Heart left ventricle (tissue), 16 donors: ENCODE measurements at regions of chr9 and their contacts with region 1.

Region 1: GRCh38 chr9:27870404-27870803 is 297.1 kb upstream of the C9orf72 start:
- DNase-seq: no peak
- ATAC-seq: no peak
- H3K4me3 ChIP-seq: no peak overlapping the region
- H3K27ac ChIP-seq: no peak overlapping the region
- H3K4me1 ChIP-seq: no peaks in the 10 kb centered on the region
- H3K27me3 ChIP-seq: no peaks in the 10 kb centered on the region
- CTCF ChIP-seq: no peak
- POLR2A ChIP-seq: no peak

Region 2: GRCh38 chr9:27817747-27818146 is 52.7 kb before region 1 on chr9:
- intact Hi-C with region 1: loop called in 1 of 10 experiments (anchors 10 kb)
- DNase-seq: no peak
- ATAC-seq: no peak
- H3K4me3 ChIP-seq: no peak overlapping the region
- H3K27ac ChIP-seq: no peak overlapping the region
- H3K4me1 ChIP-seq: no peaks in the 10 kb centered on the region
- H3K27me3 ChIP-seq: no peaks in the 10 kb centered on the region
- CTCF ChIP-seq: no peak
- POLR2A ChIP-seq: no peak

Region 3: GRCh38 chr9:27990524-27990923 is 120.1 kb after region 1 on chr9:
- intact Hi-C with region 1: no loop called
- DNase-seq: no peak
- ATAC-seq: no peak
- H3K4me3 ChIP-seq: no peak overlapping the region
- H3K27ac ChIP-seq: no peak overlapping the region
- H3K4me1 ChIP-seq: no peaks in the 10 kb centered on the region
- H3K27me3 ChIP-seq: peaks cover 0 to 4% (median 0%) of the 10 kb centered on the region in 9 donors
- CTCF ChIP-seq: no peak
- POLR2A ChIP-seq: no peak

Region 4: GRCh38 chr9:28839778-28840430 is 969.5 kb after region 1 on chr9:
- intact Hi-C with region 1: no loop called
- DNase-seq: peak in 1 of 5 donors; percentile 47
- ATAC-seq: no peak
- H3K4me3 ChIP-seq: no peak overlapping the region
- H3K27ac ChIP-seq: no peak overlapping the region
- H3K4me1 ChIP-seq: no peaks in the 10 kb centered on the region
- H3K27me3 ChIP-seq: no peaks in the 10 kb centered on the region
- CTCF ChIP-seq: no peak
- POLR2A ChIP-seq: no peak